ENCODE measurements at regions of chr11 and their contacts with region 1.

Region 1: GRCh38 chr11:122803306-122803705 is 35.0 kb upstream of the CRTAM start:
- DNase-seq: peak; percentile 95
- H3K4me3 Mint-ChIP-seq: peak overlapping the region; percentile 55
- H3K27ac Mint-ChIP-seq: peak overlapping the region; percentile 97
- H3K4me1 Mint-ChIP-seq: peaks cover 36% of the 10 kb centered on the region
- H3K27me3 Mint-ChIP-seq: no peaks in the 10 kb centered on the region
- CTCF ChIP-seq: no peak

Region 2: GRCh38 chr11:122584670-122585069 is 218.6 kb before region 1 on chr11:
- CTCF ChIA-PET with region 1: interaction called, 4 read pairs
- POLR2A ChIA-PET with region 1: no interaction called
- intact Hi-C with region 1: loop called (anchors 5 kb)
- DNase-seq: no peak
- H3K4me3 Mint-ChIP-seq: no peak overlapping the region
- H3K27ac Mint-ChIP-seq: no peak overlapping the region
- H3K4me1 Mint-ChIP-seq: peaks cover 15% of the 10 kb centered on the region
- H3K27me3 Mint-ChIP-seq: peaks cover 5% of the 10 kb centered on the region
- CTCF ChIP-seq: no peak

Region 3: GRCh38 chr11:122814401-122814800 is 11.1 kb after region 1 on chr11:
- CTCF ChIA-PET with region 1: interaction called, 18 read pairs
- POLR2A ChIA-PET with region 1: interaction called, 7 read pairs
- intact Hi-C with region 1: no loop called
- DNase-seq: no peak
- H3K4me3 Mint-ChIP-seq: no peak overlapping the region
- H3K27ac Mint-ChIP-seq: no peak overlapping the region
- H3K4me1 Mint-ChIP-seq: peaks cover 8% of the 10 kb centered on the region
- H3K27me3 Mint-ChIP-seq: no peaks in the 10 kb centered on the region
- CTCF ChIP-seq: no peak

Region 4: GRCh38 chr11:123062158-123062891 is 259.0 kb after region 1 on chr11:
- CTCF ChIA-PET with region 1: interaction called, 3 read pairs
- POLR2A ChIA-PET with region 1: interaction called, 4 read pairs
- intact Hi-C with region 1: loop called (anchors 5 kb)
- DNase-seq: peak; percentile 99
- H3K4me3 Mint-ChIP-seq: peak overlapping the region; percentile 97
- H3K27ac Mint-ChIP-seq: peak overlapping the region; percentile 99
- H3K4me1 Mint-ChIP-seq: peaks cover 46% of the 10 kb centered on the region
- H3K27me3 Mint-ChIP-seq: no peaks in the 10 kb centered on the region
- CTCF ChIP-seq: no peak

Measured in MCF 10A (cell line).